Heart left ventricle (tissue), 16 donors: ENCODE measurements at regions of chr17 and their contacts with region 1.

Region 1: GRCh38 chr17:50114849-50115357 is 15.1 kb downstream of the SAMD14 start:
- DNase-seq: no peak
- ATAC-seq: no peak
- H3K4me3 ChIP-seq: no peak overlapping the region
- H3K27ac ChIP-seq: peak overlapping the region in 5 of 12 donors; percentile 8 to 99 (median 95)
- H3K4me1 ChIP-seq: peaks cover 6 to 76% (median 33%) of the 10 kb centered on the region in 12 donors
- H3K27me3 ChIP-seq: peaks cover 0 to 36% (median 0%) of the 10 kb centered on the region in 9 donors
- CTCF ChIP-seq: peak; percentile 31 to 70 (median 53)
- POLR2A ChIP-seq: no peak

Region 2: DNA sequence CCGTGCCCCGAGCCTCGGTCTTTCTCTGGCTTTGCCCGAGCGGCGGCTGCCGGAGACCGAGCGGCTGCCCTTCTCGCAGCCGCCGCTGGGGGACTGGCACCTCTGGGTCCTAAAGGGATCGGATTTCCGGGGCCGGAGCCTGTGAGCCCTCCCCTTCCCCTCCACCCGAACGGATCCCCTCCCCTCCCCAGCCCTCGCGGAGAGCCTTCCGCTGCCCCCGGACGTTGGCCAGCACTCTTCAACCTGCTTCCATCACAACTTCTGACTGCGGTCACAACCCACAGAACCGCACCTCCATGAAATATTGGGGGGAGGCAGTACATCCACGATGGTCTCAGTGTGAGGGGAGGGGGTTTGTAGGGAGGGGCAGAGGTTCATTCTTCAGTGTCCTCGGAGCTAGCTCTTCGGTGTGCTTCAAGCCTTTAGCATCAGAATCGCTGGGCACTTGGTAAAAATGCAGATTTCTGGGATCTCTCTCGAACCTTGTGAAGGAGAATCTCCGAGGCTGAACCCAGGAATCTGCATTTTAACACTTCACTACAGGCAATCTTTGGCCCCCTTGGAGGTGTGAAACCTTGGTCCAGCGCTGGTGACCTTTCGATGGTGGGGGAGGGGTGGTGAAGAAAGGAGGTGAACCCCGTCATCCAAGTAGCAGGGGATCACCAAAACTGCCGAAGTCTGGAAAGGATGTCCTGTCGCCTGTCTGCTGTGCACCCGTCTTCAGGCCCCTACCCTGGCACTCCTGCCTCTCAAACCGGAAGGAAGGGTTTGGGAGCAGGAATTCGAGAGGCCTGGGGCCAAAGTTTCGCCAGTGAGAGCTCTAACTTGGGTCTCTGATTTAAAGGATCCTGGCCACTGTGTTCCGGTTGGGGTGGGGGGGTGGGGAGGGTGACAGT is 36.4 kb after region 1 on chr17:
- intact Hi-C with region 1: loop called in 1 of 10 experiments (anchors 5 kb)
- DNase-seq: peak; percentile 93 to 95 (median 95)
- ATAC-seq: peak; percentile 75 to 85 (median 80)
- H3K4me3 ChIP-seq: peak overlapping the region; percentile 61 to 98 (median 92)
- H3K27ac ChIP-seq: peak overlapping the region; percentile 83 to 99 (median 96)
- H3K4me1 ChIP-seq: peaks cover 9 to 79% (median 63%) of the 10 kb centered on the region in 12 donors
- H3K27me3 ChIP-seq: no peaks in the 10 kb centered on the region
- CTCF ChIP-seq: peak; percentile 41 to 75 (median 62)
- POLR2A ChIP-seq: peak in 1 of 2 donors; percentile 62

Region 3: GRCh38 chr17:50161023-50161910 is 46.4 kb after region 1 on chr17:
- intact Hi-C with region 1: loop called in 8 of 10 experiments (anchors 5 to 10 kb)
- DNase-seq: peak; percentile 92 to 96 (median 94)
- ATAC-seq: peak; percentile 79 to 87 (median 86)
- H3K4me3 ChIP-seq: peak overlapping the region; percentile 27 to 70 (median 62)
- H3K27ac ChIP-seq: peak overlapping the region; percentile 10 to 83 (median 72)
- H3K4me1 ChIP-seq: peaks cover 0 to 42% (median 22%) of the 10 kb centered on the region in 12 donors
- H3K27me3 ChIP-seq: no peaks in the 10 kb centered on the region
- CTCF ChIP-seq: peak; percentile 83 to 99 (median 95)
- POLR2A ChIP-seq: peak in 1 of 2 donors; percentile 59

Region 4: GRCh38 chr17:50177983-50178834 is 63.3 kb after region 1 on chr17:
- intact Hi-C with region 1: loop called in 2 of 10 experiments (anchors 5 kb)
- DNase-seq: peak; percentile 87 to 92 (median 89)
- ATAC-seq: peak; percentile 83 to 89 (median 87)
- H3K4me3 ChIP-seq: peak overlapping the region in 8 of 12 donors; percentile 10 to 31 (median 14)
- H3K27ac ChIP-seq: peak overlapping the region; percentile 39 to 95 (median 84)
- H3K4me1 ChIP-seq: peaks cover 0 to 56% (median 36%) of the 10 kb centered on the region in 12 donors
- H3K27me3 ChIP-seq: no peaks in the 10 kb centered on the region
- CTCF ChIP-seq: peak; percentile 33 to 72 (median 52)
- POLR2A ChIP-seq: peak in 1 of 2 donors; percentile 39

Region 5: GRCh38 chr17:50184064-50184463 is 69.2 kb after region 1 on chr17:
- intact Hi-C with region 1: loop called in 2 of 10 experiments (anchors 5 kb)
- DNase-seq: peak in 1 of 5 donors; percentile 20
- ATAC-seq: no peak
- H3K4me3 ChIP-seq: peak overlapping the region in 1 of 12 donors; percentile 15
- H3K27ac ChIP-seq: peak overlapping the region in 3 of 12 donors; percentile 10 to 74 (median 34)
- H3K4me1 ChIP-seq: peaks cover 0 to 22% (median under 1%) of the 10 kb centered on the region in 12 donors
- H3K27me3 ChIP-seq: no peaks in the 10 kb centered on the region
- CTCF ChIP-seq: no peak
- POLR2A ChIP-seq: no peak